ENCODE measurements at regions of chr1 and their contacts with region 1.

Region 1: DNA sequence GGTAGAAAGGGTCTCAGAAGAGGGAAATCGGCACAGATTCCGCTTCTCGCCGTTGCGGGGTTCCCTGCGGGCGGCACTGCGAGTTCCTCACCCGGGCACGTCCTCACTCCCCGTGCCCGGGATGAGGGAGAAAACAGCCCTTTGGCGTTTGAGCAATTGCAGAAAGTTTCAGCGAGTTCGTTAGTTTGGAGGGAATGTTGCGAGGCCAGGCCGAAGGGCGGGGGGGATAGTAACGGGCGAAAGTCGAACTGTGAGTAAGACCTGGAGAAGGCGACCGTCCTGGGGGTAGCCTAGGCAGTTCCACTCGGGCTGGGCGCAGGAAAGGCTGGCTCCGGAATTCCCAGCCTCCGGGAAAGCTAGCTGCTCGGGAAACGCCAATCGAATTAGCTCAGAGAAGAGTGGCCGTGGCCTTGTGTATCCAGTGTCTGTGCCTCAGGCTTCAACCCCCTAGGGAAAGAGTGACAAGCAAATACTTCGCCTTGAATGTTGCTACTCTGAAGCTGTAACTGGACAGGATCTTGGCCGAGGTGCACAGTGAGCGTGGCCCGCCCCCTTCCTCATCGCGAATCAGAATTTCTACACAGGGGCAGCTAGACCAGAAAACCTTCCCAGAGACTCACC is 787 bp downstream of the PTGFR start:
- DNase-seq: peak; percentile 26
- H3K27ac ChIP-seq: peak overlapping the region; percentile 70
- CTCF ChIP-seq: no peak

Region 2: GRCh38 chr1:78223417-78224215 is 267.9 kb before region 1 on chr1:
- CTCF ChIA-PET with region 1: no interaction called
- POLR2A ChIA-PET with region 1: no interaction called
- DNase-seq: no peak
- H3K27ac ChIP-seq: no peak overlapping the region
- CTCF ChIP-seq: no peak

Region 3: DNA sequence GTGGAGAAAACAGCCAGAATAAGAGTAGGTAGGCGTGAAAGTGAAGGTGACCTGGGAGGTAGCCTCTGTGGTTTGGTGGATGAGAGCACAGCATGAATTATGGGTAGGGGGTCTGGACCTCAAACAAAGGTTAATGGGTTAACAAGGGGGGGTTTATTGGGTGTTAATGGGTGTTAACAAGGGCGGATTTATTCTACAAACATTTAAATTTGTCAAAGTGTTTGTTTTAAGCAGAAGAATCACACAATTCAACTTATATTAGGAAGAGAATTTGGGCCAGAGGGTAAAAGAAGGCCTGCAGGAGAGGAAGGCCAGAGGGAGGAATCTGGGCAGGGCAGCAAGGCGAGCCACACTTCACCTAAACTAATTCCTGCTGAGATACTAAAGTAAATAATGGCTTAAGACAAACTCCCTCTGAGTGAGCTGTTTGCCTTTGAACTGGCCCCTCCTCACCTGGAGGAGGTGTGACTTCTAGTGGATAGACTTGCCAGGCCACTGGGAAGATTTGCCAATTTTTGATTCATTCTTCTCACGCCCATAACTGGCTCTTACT is 254.1 kb before region 1 on chr1:
- CTCF ChIA-PET with region 1: interaction called, 12 read pairs
- POLR2A ChIA-PET with region 1: no interaction called
- DNase-seq: peak; percentile 87
- H3K27ac ChIP-seq: peak overlapping the region; percentile 60; the same call in 1 of the 2 replicates
- CTCF ChIP-seq: no peak

Region 4: DNA sequence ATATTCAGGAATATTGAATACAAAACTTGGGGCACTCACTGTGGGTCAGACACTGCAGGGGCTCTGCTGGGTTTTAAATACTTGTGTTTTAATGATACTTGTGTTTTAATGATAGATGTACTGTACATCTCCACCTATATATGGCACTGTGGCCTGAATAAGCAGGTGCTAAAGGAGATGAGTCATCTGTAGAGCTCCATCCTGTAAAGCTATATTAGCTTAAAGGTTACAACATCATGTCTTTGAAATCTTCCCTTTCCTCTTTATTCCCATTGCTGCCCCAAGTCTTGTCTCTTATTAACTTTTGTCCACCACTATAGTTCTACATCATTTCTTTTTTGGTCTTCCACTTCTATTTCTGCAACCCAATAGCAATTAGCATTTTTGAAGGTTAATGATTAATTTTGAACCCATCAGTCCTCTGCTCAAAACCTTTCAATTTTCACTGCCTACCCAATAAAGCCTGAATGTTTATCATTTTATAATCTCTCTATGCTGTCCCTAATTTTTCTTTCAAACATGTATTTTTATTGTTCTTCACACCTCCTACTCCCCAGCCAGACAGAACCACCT is 114.1 kb before region 1 on chr1:
- CTCF ChIA-PET with region 1: no interaction called
- POLR2A ChIA-PET with region 1: no interaction called
- DNase-seq: peak; percentile 17
- H3K27ac ChIP-seq: no peak overlapping the region
- CTCF ChIP-seq: no peak

Region 5: DNA sequence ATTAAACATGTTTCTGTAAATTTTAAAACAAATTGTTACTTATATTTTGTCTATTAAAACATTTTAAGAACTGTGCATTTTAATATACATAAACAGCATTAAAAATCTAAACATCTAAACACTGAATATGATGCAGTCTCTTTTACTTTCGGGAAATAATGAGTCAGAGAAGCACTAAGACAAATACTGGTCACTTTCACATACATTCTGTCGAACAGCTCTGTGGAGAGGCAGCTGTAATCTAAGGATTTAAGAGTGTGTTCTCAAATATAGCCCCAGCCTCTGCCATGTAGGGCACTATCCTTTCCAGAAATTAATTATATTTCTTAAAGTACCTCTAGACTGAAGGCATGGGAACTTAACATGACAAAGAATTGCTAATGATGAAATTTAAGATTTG is 90.4 kb before region 1 on chr1:
- CTCF ChIA-PET with region 1: no interaction called
- POLR2A ChIA-PET with region 1: no interaction called
- DNase-seq: no peak
- H3K27ac ChIP-seq: no peak overlapping the region
- CTCF ChIP-seq: no peak

Region 6: GRCh38 chr1:78519446-78519845 is 27.9 kb after region 1 on chr1:
- CTCF ChIA-PET with region 1: no interaction called
- POLR2A ChIA-PET with region 1: no interaction called
- DNase-seq: no peak
- H3K27ac ChIP-seq: no peak overlapping the region
- CTCF ChIP-seq: no peak

Measured in RWPE1 (cell line).